Naive thymus-derived CD4-positive, alpha-beta T cell (primary cell): ENCODE measurements at regions of chr15 and their contacts with region 1.

Region 1: DNA sequence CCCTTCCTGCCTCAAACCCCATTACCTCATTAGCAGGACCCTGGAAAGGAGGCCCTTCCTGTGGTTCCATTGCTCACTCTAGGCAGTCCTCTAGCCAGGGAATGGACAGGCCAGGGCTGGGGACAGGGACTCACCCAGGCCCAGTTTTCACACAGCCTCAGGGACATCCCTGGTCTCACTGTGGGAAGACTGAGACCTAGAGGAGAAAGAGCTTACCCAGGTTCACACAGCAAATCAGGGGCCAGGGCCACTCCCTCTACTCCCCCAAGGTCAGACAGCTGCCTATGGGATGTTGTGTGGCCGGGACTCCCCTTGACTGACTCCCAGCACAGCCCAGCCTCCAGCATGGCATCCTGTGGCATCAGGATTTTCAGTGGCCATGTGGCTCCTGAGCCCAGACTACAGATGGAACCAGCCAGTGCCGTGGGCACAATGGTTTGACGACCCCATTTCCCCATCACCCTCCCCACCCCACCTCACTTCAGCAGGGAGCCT is 49.3 kb downstream of the ADAMTS7 start:
- DNase-seq: no peak
- ATAC-seq: no peak
- H3K4me3 ChIP-seq: peak overlapping the region; percentile 73
- H3K4me3 Mint-ChIP-seq: peak overlapping the region; percentile 44 to 76 (median 72)
- H3K27ac ChIP-seq: peak overlapping the region; percentile 67
- H3K27ac Mint-ChIP-seq: peak overlapping the region; percentile 84 to 93 (median 90)
- H3K4me1 ChIP-seq: peaks cover 15 to 22% of the 10 kb centered on the region in 2 donors
- H3K4me1 Mint-ChIP-seq: peaks cover 9 to 35% (median 27%) of the 10 kb centered on the region in 7 donors
- H3K27me3 ChIP-seq: no peaks in the 10 kb centered on the region
- H3K27me3 Mint-ChIP-seq: no peaks in the 10 kb centered on the region

Region 2: GRCh38 chr15:78709263-78709882 is 52.6 kb before region 1 on chr15:
- CTCF ChIA-PET with region 1: no interaction called
- POLR2A ChIA-PET with region 1: no interaction called
- intact Hi-C with region 1: no loop called
- DNase-seq: peak; percentile 20 to 70 (median 50)
- ATAC-seq: peak; percentile 94
- H3K4me3 ChIP-seq: no peak overlapping the region
- H3K4me3 Mint-ChIP-seq: peak overlapping the region in 6 of 10 donors; percentile 6 to 64 (median 38)
- H3K27ac ChIP-seq: no peak overlapping the region
- H3K27ac Mint-ChIP-seq: peak overlapping the region in 1 of 9 donors; percentile 26
- H3K4me1 ChIP-seq: no peaks in the 10 kb centered on the region
- H3K4me1 Mint-ChIP-seq: peaks cover 0 to 12% (median 7%) of the 10 kb centered on the region in 7 donors
- H3K27me3 ChIP-seq: peaks cover 0 to 7% of the 10 kb centered on the region in 2 donors
- H3K27me3 Mint-ChIP-seq: peaks cover 31 to 42% (median 39%) of the 10 kb centered on the region in 5 donors

Region 3: GRCh38 chr15:78811124-78811824 is 49.3 kb after region 1 on chr15 and contains the start of gene ADAMTS7:
- CTCF ChIA-PET with region 1: no interaction called
- POLR2A ChIA-PET with region 1: no interaction called
- intact Hi-C with region 1: loop called (anchors 1 to 2 kb)
- DNase-seq: peak in 8 of 9 donors; percentile 16 to 69 (median 31)
- ATAC-seq: peak; percentile 82
- H3K4me3 ChIP-seq: peak within 1 kb of the TSS; percentile 37
- H3K4me3 Mint-ChIP-seq: peak within 1 kb of the TSS; percentile 77 to 88 (median 84)
- H3K27ac ChIP-seq: no peak within 1 kb of the TSS
- H3K27ac Mint-ChIP-seq: peak within 1 kb of the TSS in 3 of 9 donors; percentile 22 to 53 (median 32)
- H3K4me1 ChIP-seq: no peaks in the 10 kb centered on the region
- H3K4me1 Mint-ChIP-seq: peaks cover 8 to 16% (median 14%) of the 10 kb centered on the region in 7 donors
- H3K27me3 ChIP-seq: peaks cover 0 to 3% of the 10 kb centered on the region in 2 donors
- H3K27me3 Mint-ChIP-seq: peaks cover 38 to 51% (median 50%) of the 10 kb centered on the region in 5 donors
- total RNA-seq, gene ADAMTS7: 1.5 TPM in 1 of 5 experiments, not detected in the others